GM13977 (cell line): ENCODE measurements at regions of chr2 and their contacts with region 1.

Region 1: DNA sequence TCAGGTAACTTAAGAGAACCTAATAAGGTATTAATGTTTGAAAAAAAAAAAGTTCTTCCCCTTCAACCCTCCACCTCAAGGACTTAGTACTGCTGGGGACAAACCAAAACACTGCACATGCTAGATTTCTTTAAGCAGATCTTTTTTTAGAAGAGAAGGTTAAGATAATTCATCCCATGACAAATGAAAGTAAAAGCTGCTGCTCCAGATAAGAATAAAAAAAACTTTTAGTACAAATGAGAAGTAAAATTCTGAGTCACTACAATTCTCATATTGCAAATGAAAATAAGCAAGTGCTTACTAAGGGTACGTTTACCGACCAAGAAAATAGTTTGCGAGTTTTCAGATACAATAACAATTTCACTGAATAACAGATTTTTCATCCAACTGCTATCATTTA is 8.9 kb downstream of the STAM2 start:
- DNase-seq: peak; percentile 63
- CTCF ChIP-seq: no peak

Region 2: GRCh38 chr2:151905963-151906632 is 260.5 kb before region 1 on chr2:
- in situ Hi-C with region 1: no loop called
- DNase-seq: peak; percentile 31
- CTCF ChIP-seq: no peak

Region 3: GRCh38 chr2:152047819-152048471 is 118.7 kb before region 1 on chr2:
- in situ Hi-C with region 1: loop called (anchors 10 kb)
- DNase-seq: no peak
- CTCF ChIP-seq: peak; percentile 54

Region 4: DNA sequence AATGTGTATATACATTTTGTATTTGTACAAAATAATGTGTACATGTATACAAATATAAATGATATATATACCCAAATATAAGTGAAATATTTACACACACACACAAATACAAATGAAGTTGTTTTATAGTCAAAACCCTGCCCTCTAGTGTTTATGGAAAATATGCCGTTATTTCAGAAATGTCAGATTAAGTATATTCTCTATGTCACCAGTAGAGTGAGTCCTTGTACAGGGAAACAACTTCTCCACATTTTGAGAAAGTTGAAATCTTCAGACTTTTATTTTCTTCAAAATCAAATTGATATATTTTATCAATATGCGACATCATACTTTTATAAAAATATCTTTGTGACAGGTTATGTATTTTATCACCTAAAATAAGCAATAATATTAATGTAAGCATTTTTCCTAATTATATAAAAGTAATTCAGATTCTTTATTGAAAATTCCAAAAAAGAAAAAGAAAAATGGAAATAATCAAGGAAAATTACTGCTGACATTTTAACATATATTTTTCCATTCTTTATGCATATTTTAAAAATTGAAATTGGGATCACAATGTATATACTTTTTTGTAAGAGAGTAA is 574.2 kb after region 1 on chr2:
- in situ Hi-C with region 1: no loop called
- DNase-seq: peak; percentile 41
- CTCF ChIP-seq: peak; percentile 81